BJ (cell line): ENCODE measurements at regions of chr12 and their contacts with region 1.

Region 1: DNA sequence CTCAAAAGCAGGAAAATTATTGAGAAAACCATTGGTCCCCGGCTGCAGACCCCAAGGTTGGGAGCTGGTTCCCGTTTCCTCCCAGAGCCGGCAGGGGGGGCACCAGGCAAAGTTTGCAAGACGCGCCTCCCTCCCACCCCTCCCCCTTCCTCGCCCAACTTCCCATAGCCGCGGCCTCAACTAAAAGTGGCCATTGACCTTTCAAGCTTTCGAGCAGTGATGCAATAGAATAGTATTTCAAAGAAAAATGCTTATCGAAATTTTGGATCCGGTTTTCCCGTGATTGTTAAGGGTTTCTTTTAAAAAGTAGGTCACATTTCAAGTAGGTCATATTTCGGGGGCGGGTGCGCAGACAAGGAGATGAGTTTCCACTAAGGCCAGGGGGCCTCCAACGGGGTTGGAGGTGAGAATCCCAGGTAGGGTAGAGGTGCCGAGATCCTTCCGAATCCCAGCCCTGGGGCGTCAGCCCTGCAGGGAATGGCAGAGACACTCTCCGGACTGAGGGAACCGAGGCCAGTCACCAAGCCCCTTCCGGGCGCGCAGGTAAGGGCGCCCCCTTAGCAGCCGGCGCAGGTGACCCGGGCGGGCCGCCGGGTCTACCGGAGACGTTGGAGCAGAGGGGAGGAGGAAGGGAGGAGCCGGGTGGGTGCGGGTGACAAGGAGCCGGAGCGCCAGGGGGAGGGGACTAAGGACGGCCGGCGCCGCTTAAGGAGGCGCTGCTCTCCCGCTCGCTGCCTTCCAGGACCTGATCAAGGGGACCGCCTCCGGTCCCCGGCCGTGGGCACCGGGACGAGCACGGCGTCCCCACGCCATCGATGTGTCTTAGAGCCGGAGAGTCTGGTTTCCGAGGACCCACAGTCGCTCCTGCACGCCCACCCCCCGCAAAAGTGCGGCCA is 2.6 kb upstream of the SOCS2 start:
- DNase-seq: no peak
- H3K4me3 ChIP-seq: peak overlapping the region; percentile 93
- H3K27me3 ChIP-seq: no peaks in the 10 kb centered on the region
- CTCF ChIP-seq: peak; percentile 93

Region 2: GRCh38 chr12:93612776-93613175 is 42.9 kb after region 1 on chr12:
- CTCF ChIA-PET with region 1: no interaction called
- POLR2A ChIA-PET with region 1: no interaction called
- DNase-seq: no peak
- H3K4me3 ChIP-seq: no peak overlapping the region
- H3K27me3 ChIP-seq: no peaks in the 10 kb centered on the region
- CTCF ChIP-seq: no peak

Region 3: GRCh38 chr12:93638095-93638494 is 68.2 kb after region 1 on chr12:
- CTCF ChIA-PET with region 1: no interaction called
- POLR2A ChIA-PET with region 1: interaction called, 11 read pairs
- DNase-seq: no peak
- H3K4me3 ChIP-seq: no peak overlapping the region
- H3K27me3 ChIP-seq: no peaks in the 10 kb centered on the region
- CTCF ChIP-seq: no peak

Region 4: GRCh38 chr12:93689076-93689834 is 119.4 kb after region 1 on chr12:
- CTCF ChIA-PET with region 1: no interaction called
- POLR2A ChIA-PET with region 1: no interaction called
- DNase-seq: no peak
- H3K4me3 ChIP-seq: no peak overlapping the region
- H3K27me3 ChIP-seq: no peaks in the 10 kb centered on the region
- CTCF ChIP-seq: no peak

Region 5: DNA sequence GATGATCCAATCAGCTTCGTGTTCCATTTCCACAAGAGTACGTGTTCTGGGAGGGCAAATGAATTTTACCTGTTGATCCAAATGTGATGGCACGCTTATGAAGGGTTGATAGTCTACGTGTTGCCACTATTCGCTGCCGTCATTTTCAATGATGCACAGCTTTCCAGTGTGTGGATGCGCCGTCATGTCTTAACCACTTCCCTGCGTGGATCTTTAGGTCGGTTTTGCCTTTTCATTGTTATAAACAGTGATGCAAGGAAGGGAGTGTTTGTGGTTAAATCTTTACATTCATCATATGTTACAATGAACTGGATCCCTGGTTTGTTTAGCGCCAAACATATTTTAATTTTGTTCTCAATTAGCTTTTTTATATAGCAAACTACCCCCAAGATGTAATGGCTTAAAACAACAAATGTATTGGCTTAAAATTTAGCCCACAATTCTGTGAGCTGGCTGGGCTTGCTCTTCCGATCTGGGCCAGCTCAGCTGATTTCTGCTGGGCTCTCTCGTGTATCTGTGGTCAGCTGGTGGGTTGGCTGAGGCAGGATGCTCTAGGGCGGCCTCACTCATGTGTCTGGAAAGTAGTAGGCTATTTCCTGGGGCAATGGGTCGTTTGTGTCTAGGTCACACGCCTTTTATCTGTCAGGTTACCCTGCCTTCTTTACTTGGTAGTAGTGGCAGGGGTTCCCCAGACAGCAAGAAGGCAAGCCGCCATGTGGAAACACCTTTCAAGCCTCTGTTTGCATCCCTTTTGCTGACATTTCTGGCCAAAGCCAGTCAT is 284.0 kb after region 1 on chr12:
- CTCF ChIA-PET with region 1: interaction called, 3 read pairs
- POLR2A ChIA-PET with region 1: interaction called, 16 read pairs
- DNase-seq: no peak
- H3K4me3 ChIP-seq: no peak overlapping the region
- H3K27me3 ChIP-seq: no peaks in the 10 kb centered on the region
- CTCF ChIP-seq: no peak